GM23248 (cell line): ENCODE measurements at regions of chr1 and their contacts with region 1.

Region 1: GRCh38 chr1:15994590-15995351 is 9.3 kb upstream of the SRARP start:
- DNase-seq: peak; percentile 78
- H3K4me3 ChIP-seq: no peak overlapping the region
- H3K27ac ChIP-seq: no peak overlapping the region
- H3K4me1 ChIP-seq: no peaks in the 10 kb centered on the region
- H3K27me3 ChIP-seq: no peaks in the 10 kb centered on the region

Region 2: GRCh38 chr1:15062479-15063099 is 932.2 kb before region 1 on chr1:
- in situ Hi-C with region 1: no loop called
- DNase-seq: no peak
- H3K4me3 ChIP-seq: no peak overlapping the region
- H3K27ac ChIP-seq: no peak overlapping the region
- H3K4me1 ChIP-seq: no peaks in the 10 kb centered on the region
- H3K27me3 ChIP-seq: no peaks in the 10 kb centered on the region

Region 3: GRCh38 chr1:15810073-15810472 is 184.7 kb before region 1 on chr1:
- in situ Hi-C with region 1: loop called (anchors 5 kb)
- DNase-seq: no peak
- H3K4me3 ChIP-seq: no peak overlapping the region
- H3K27ac ChIP-seq: no peak overlapping the region
- H3K4me1 ChIP-seq: no peaks in the 10 kb centered on the region
- H3K27me3 ChIP-seq: no peaks in the 10 kb centered on the region

Region 4: GRCh38 chr1:16167331-16168143 is 172.8 kb after region 1 on chr1:
- in situ Hi-C with region 1: no loop called
- DNase-seq: peak; percentile 48
- H3K4me3 ChIP-seq: peak overlapping the region; percentile 53
- H3K27ac ChIP-seq: no peak overlapping the region
- H3K4me1 ChIP-seq: peaks cover 6% of the 10 kb centered on the region
- H3K27me3 ChIP-seq: no peaks in the 10 kb centered on the region; the same call in 1 of the 2 replicates

Region 5: GRCh38 chr1:16181887-16182719 is 187.3 kb after region 1 on chr1:
- in situ Hi-C with region 1: no loop called
- DNase-seq: peak; percentile 96
- H3K4me3 ChIP-seq: peak overlapping the region; percentile 21; the same call in 1 of the 2 replicates
- H3K27ac ChIP-seq: peak overlapping the region; percentile 87
- H3K4me1 ChIP-seq: peaks cover 34% of the 10 kb centered on the region
- H3K27me3 ChIP-seq: no peaks in the 10 kb centered on the region